ENCODE measurements at regions of chr5 and their contacts with region 1.

Region 1: DNA sequence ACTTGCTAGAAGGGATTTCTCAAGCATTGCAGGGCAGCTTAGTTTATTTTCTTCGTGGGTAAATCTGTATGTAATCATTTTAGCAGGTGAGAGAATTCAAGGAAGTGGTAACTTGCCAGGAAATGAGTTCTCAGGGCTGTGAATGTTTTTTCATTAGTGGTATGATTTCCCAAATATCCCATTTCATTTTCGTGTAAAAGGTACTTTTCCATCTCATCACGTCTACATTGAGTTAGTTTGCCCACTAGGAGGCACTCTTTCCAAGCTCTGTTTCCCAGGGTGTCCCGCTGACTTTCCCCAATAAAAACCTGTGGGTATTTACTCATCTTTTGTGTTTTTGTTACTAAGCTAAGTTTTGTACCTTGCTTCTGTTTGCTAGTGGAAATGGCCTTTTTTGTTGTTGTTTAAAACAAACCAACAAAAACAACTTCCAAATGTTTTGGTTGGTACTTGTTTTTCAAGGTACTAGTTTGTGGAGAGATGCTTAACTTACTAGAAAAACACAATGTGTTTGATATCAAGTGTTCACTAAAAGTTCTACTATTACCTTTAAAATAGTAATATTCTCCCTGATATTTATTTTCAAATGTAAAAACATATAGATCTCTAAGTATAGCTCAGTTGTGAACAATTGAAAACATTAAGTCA is 373.6 kb downstream of the ADGRV1 start:
- DNase-seq: peak in 1 of 2 donors; percentile 11
- ATAC-seq: peak; percentile 75 to 80
- H3K4me3 ChIP-seq: no peak overlapping the region
- H3K27ac ChIP-seq: peak overlapping the region in 1 of 4 donors; percentile 5
- H3K4me1 ChIP-seq: no peaks in the 10 kb centered on the region
- H3K27me3 ChIP-seq: no peaks in the 10 kb centered on the region
- CTCF ChIP-seq: peak; percentile 66 to 82 (median 73)
- POLR2A ChIP-seq: no peak

Region 2: DNA sequence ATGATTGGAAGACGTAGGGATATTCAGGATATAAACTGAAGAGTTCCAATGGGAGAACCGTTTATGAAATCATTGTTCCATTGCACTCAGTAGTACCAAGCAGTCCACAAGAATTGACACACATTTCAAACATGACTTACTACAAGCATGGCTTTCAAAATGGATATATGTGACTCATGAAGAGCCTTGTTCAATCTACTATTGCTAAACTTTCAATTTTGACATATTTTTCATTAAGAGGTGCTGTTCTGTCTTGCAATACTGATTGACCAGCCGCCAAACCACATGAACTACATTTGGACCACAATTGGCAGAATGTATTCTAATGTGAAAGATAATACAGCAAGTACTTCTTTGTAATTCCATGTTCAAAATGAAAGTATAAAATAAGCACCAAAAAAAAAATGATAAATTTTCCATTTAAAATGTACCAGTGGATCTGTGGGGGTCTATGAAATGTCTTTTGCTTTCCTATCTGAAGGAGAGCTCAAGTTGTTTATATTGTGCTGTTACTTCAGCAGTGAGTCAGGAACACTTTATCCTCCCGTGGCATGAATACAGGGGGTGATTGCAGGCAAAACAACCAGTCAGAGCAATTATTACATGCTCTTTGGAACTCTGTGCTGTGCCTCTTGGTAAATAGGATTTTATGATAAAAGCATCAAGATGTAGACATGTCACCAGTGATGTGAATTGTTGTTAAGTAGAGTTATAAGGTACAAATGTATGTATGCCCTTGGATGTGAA is 85.0 kb after region 1 on chr5:
- in situ Hi-C with region 1: no loop called
- intact Hi-C with region 1: loop called (anchors 5 kb)
- DNase-seq: peak; percentile 62 to 63
- ATAC-seq: peak; percentile 89 to 94
- H3K4me3 ChIP-seq: peak overlapping the region in 3 of 4 donors; percentile 24 to 32 (median 27)
- H3K27ac ChIP-seq: peak overlapping the region; percentile 70 to 81 (median 76)
- H3K4me1 ChIP-seq: peaks cover 41 to 45% of the 10 kb centered on the region in 2 donors
- H3K27me3 ChIP-seq: no peaks in the 10 kb centered on the region
- CTCF ChIP-seq: no peak
- POLR2A ChIP-seq: no peak

Region 3: GRCh38 chr5:91074615-91075014 is 142.4 kb after region 1 on chr5:
- in situ Hi-C with region 1: loop called in 2 of 4 experiments (anchors 25 kb)
- intact Hi-C with region 1: no loop called
- DNase-seq: no peak
- ATAC-seq: no peak
- H3K4me3 ChIP-seq: no peak overlapping the region
- H3K27ac ChIP-seq: no peak overlapping the region
- H3K4me1 ChIP-seq: peaks cover 12 to 14% of the 10 kb centered on the region in 2 donors
- H3K27me3 ChIP-seq: no peaks in the 10 kb centered on the region
- CTCF ChIP-seq: no peak
- POLR2A ChIP-seq: no peak

Region 4: DNA sequence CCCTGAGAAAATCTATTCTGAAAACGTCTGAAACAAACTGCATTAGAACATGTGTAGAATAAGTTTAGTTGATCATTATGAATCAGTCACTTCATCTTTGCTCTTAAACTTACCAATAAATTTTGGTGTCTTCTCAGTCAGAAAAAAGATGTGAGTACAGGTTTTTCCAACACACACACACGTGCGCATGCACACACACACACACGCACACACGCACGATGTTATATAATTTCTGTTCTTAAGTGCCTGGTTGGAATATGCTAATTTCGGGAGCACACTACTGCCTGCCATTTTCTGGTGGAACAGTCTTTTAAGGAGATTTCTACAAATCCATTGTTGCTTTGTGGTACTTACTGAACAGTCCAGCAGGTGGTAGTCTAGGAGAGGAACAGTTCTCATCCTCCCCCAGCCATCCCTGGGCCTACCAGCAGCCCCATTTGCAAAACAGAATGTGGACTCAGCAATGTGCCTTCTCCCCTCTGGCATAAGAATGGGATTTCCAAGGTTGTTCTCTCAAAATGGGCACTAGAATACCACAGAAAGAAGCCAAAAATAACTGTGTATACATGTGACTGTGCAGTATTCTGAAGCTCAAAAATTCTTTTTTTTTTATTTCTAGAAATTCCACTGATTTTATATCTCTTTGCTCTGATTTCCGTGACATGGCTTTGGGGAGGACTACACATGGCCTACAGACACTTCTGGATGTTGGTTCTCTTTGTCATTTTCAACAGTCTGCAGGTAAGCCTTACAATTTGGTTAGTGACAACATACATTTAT is 169.6 kb after region 1 on chr5:
- in situ Hi-C with region 1: loop called in 3 of 4 experiments (anchors 10 to 25 kb)
- intact Hi-C with region 1: loop called (anchors 2 kb)
- DNase-seq: peak; percentile 46 to 61
- ATAC-seq: peak; percentile 93 to 95
- H3K4me3 ChIP-seq: no peak overlapping the region
- H3K27ac ChIP-seq: no peak overlapping the region
- H3K4me1 ChIP-seq: peaks cover 0 to 9% of the 10 kb centered on the region in 2 donors
- H3K27me3 ChIP-seq: no peaks in the 10 kb centered on the region
- CTCF ChIP-seq: peak; percentile 79 to 91 (median 81)
- POLR2A ChIP-seq: no peak

Region 5: DNA sequence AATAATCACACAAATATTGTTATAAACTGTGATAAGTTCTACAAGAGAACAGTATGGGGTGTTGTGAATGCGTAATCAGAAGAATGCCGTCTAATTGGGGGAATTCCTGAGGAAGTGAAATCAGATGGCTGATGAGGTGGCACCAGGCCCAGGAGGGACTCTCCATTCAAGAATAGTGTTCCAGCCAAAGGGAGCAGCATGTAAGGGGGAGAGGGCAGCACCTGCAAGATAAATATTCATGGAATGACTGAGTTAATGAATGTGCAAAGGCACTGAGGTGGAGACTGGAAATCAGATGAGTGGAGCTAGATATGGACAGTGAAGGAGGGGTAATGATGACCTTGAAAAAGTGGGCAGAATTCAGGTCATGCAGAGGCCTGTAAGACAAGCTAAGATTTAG is 200.4 kb after region 1 on chr5:
- in situ Hi-C with region 1: no loop called
- intact Hi-C with region 1: no loop called
- DNase-seq: no peak
- ATAC-seq: no peak
- H3K4me3 ChIP-seq: no peak overlapping the region
- H3K27ac ChIP-seq: no peak overlapping the region
- H3K4me1 ChIP-seq: no peaks in the 10 kb centered on the region
- H3K27me3 ChIP-seq: no peaks in the 10 kb centered on the region
- CTCF ChIP-seq: no peak
- POLR2A ChIP-seq: no peak

Region 6: GRCh38 chr5:91225848-91226686 is 293.9 kb after region 1 on chr5:
- in situ Hi-C with region 1: no loop called
- intact Hi-C with region 1: loop called (anchors 5 kb)
- DNase-seq: no peak
- ATAC-seq: peak; percentile 73 to 77
- H3K4me3 ChIP-seq: no peak overlapping the region
- H3K27ac ChIP-seq: no peak overlapping the region
- H3K4me1 ChIP-seq: no peaks in the 10 kb centered on the region
- H3K27me3 ChIP-seq: no peaks in the 10 kb centered on the region
- CTCF ChIP-seq: peak; percentile 26 to 51 (median 50)
- POLR2A ChIP-seq: no peak

Region 7: GRCh38 chr5:91403438-91403837 is 471.3 kb after region 1 on chr5:
- in situ Hi-C with region 1: loop called in 1 of 4 experiments (anchors 10 kb)
- intact Hi-C with region 1: no loop called
- DNase-seq: no peak
- ATAC-seq: no peak
- H3K4me3 ChIP-seq: no peak overlapping the region
- H3K27ac ChIP-seq: no peak overlapping the region
- H3K4me1 ChIP-seq: no peaks in the 10 kb centered on the region
- H3K27me3 ChIP-seq: no peaks in the 10 kb centered on the region
- CTCF ChIP-seq: no peak
- POLR2A ChIP-seq: no peak

Region 8: DNA sequence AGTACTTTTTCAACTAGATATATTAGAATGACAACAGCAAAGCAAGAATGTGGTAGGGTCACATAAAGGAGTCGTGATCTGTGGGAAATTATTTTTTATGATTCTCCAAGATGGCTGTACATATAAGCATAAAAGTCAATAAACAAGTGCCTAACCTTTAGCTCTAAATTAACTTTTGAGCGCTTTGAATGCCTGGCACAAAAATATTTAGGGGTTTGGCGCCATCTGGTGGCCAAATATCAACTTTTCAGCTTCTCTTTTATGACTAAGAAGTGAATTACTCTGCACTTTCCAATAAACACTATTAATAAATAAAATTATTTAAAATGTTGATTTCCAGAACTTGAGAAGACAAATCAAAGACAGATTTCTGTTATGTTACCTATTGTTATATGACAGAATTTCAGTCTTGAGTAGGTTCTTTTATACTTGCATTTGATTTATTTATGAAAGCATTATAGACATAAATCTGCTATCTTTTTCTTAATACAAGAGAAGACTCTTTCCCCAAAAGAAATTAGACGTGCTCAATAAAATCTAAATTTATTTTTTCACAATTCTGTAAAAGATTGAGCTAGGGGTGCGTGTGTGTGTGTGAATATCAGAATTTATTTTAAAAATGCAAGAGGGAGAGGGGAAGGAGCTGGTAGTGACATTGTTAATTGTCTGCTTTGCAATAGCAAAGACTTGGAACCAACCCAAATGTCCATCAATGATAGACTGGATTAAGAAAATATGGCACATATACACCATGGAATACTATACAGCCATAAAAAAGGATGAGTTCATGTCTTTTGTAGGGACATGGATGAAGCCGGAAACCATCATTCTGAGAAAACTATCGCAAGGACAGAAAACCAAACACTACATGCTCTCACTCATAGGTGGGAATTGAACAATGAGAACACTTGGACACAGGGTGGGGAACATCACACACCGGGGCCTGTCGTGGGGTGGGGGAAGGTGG is 487.7 kb after region 1 on chr5:
- in situ Hi-C with region 1: loop called in 1 of 4 experiments (anchors 10 kb)
- intact Hi-C with region 1: loop called (anchors 10 kb)
- DNase-seq: peak; percentile 10 to 24
- ATAC-seq: peak in 1 of 2 donors; percentile 55
- H3K4me3 ChIP-seq: no peak overlapping the region
- H3K27ac ChIP-seq: no peak overlapping the region
- H3K4me1 ChIP-seq: no peaks in the 10 kb centered on the region
- H3K27me3 ChIP-seq: no peaks in the 10 kb centered on the region
- CTCF ChIP-seq: peak; percentile 62 to 79 (median 68)
- POLR2A ChIP-seq: no peak